H1 (cell line): ENCODE measurements at regions of chr15 and their contacts with region 1.

Region 1: GRCh38 chr15:41811432-41812195 is 16.3 kb upstream of the JMJD7 start:
- DNase-seq: peak; percentile 65 to 91
- H3K4me3 ChIP-seq: no peak overlapping the region
- H3K27ac ChIP-seq: no peak overlapping the region
- H3K4me1 ChIP-seq: peaks cover 0 to 2% (median 0%) of the 10 kb centered on the region in 4 experiments; a peak in 2 of 7 replicates
- H3K27me3 ChIP-seq: no peaks in the 10 kb centered on the region
- CTCF ChIP-seq: peak; percentile 82 to 89 (median 83)
- EP300 ChIP-seq: no peak
- POLR2A ChIP-seq: no peak
- RAD21 ChIP-seq: peak; percentile 91 to 94

Region 2: DNA sequence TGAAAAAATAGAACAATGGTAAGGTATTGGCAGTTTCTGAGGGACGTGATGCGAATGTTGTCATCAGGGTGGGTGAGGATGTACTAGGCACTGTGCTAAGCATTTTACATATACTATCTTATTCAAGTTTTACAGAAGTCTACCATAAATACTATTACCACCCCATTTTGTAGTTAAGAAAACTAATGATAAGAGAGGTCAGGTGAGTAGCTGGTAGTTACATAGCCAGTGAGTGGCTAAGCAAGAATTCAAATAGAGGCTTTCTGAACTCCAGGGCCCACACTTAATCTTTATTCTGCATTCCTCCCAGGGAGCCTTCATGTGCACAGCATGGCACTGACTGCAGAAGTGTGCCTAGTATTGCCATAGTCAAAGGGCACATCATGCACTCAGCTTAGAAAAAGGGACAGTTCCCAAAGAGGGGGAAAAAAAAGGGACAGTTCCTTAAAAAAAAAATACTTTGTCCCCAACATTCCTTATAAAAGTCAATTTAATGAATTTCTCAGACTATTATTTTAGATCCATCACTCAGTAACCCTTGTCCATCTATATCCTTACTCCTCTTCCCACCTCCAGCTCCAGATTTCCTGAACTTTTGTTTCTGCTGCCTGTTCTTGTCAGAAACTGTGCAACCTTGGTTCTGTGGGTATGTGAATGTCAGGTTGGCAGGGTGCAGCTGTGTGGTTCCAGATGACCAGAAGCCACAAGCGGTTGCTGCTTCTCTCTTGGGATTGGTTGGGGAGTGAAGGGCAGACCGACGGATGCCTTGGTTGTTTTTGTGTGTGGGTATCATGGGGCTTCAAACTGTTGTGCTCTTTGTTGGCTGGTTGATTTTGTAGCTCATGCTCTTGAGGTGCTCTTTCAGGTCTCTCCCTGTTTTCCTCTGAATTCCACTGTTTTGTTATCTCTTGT is 29.0 kb before region 1 on chr15:
- CTCF ChIA-PET with region 1: interaction called, 283 read pairs
- POLR2A ChIA-PET with region 1: no interaction called
- DNase-seq: no peak
- H3K4me3 ChIP-seq: no peak overlapping the region
- H3K27ac ChIP-seq: no peak overlapping the region
- H3K4me1 ChIP-seq: peaks cover 2 to 13% (median 4%) of the 10 kb centered on the region in 4 experiments; a peak in 4 of 7 replicates
- H3K27me3 ChIP-seq: no peaks in the 10 kb centered on the region
- CTCF ChIP-seq: no peak
- EP300 ChIP-seq: no peak
- POLR2A ChIP-seq: no peak
- RAD21 ChIP-seq: no peak

Region 3: GRCh38 chr15:41790756-41791546 is 20.7 kb before region 1 on chr15:
- CTCF ChIA-PET with region 1: interaction called, 15 read pairs
- POLR2A ChIA-PET with region 1: no interaction called
- DNase-seq: no peak
- H3K4me3 ChIP-seq: no peak overlapping the region
- H3K27ac ChIP-seq: no peak overlapping the region; the same call in 1 of the 2 replicates
- H3K4me1 ChIP-seq: peaks cover 6 to 19% (median 13%) of the 10 kb centered on the region in 4 experiments; a peak in 6 of 7 replicates
- H3K27me3 ChIP-seq: no peaks in the 10 kb centered on the region
- CTCF ChIP-seq: no peak
- EP300 ChIP-seq: no peak
- POLR2A ChIP-seq: no peak
- RAD21 ChIP-seq: no peak

Region 4: DNA sequence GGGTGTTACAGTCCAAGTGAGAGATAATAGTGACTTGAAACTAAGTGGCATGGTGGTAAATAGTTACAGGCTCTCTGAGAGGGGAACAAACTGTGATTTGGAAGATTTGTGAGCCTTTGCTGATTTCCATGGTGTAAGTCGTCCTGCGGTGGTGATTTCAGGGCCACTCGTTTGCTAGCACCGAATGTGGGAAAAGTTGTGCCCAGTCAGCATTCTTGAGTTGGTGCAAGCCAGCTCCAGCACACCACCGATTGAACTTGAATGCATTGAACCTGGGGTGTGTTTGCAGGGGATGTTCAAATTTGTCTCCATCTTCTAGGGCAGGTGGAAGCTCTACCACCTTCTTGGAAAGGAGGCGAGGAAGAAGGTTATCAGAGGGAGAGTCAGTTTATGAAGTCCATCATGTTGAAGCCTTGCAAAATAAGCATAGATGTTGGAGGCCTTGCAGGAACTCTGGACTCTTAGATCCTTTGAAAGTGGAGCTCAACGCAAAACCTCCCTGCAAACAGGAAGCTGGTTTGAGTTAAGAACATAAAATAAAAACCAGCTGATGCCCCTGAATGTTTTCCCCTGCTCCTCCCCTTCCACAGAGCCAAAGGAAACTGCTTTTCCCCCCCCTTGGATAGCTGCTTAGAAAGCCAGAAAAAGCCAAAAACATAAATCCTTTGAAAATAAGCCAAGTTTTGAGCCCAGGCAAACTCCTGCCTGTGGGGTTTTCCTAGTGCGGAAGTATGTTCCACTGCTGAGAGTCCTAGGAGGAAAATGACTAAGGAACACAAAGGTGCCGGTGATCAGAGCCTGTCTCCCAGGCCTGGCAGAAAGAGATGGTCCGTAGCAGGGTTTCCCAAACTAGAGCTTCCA is 15.4 kb before region 1 on chr15:
- CTCF ChIA-PET with region 1: interaction called, 24 read pairs
- POLR2A ChIA-PET with region 1: no interaction called
- DNase-seq: no peak
- H3K4me3 ChIP-seq: no peak overlapping the region
- H3K27ac ChIP-seq: no peak overlapping the region; the same call in 1 of the 2 replicates
- H3K4me1 ChIP-seq: peaks cover 0 to 3% (median 2%) of the 10 kb centered on the region in 4 experiments; a peak in 4 of 7 replicates
- H3K27me3 ChIP-seq: no peaks in the 10 kb centered on the region
- CTCF ChIP-seq: no peak
- EP300 ChIP-seq: no peak
- POLR2A ChIP-seq: no peak
- RAD21 ChIP-seq: no peak